ENCODE measurements at regions of chr10 and their contacts with region 1.

Region 1: GRCh38 chr10:91313796-91314485 is 93.5 kb downstream of the PCGF5 start:
- DNase-seq: no peak

Region 2: GRCh38 chr10:90614631-90615030 is 699.3 kb before region 1 on chr10:
- intact Hi-C with region 1: loop called in 1 of 2 experiments (anchors 5 kb)
- DNase-seq: no peak

Measured in posterior vena cava (tissue), 2 donors.